ENCODE measurements at regions of chr14 and their contacts with region 1.

Region 1: GRCh38 chr14:69695322-69696203 is 71.4 kb upstream of the SRSF5 start:
- DNase-seq: no peak
- H3K4me3 Mint-ChIP-seq: peak overlapping the region; percentile 32
- H3K27ac Mint-ChIP-seq: peak overlapping the region; percentile 77
- H3K4me1 Mint-ChIP-seq: peaks cover 82% of the 10 kb centered on the region
- H3K27me3 Mint-ChIP-seq: no peaks in the 10 kb centered on the region

Region 2: GRCh38 chr14:69593018-69593677 is 102.4 kb before region 1 on chr14:
- intact Hi-C with region 1: no loop called
- DNase-seq: no peak
- H3K4me3 Mint-ChIP-seq: no peak overlapping the region
- H3K27ac Mint-ChIP-seq: no peak overlapping the region
- H3K4me1 Mint-ChIP-seq: peaks cover 7% of the 10 kb centered on the region
- H3K27me3 Mint-ChIP-seq: peaks cover 8% of the 10 kb centered on the region

Region 3: GRCh38 chr14:69715725-69716477 is 20.3 kb after region 1 on chr14:
- intact Hi-C with region 1: loop called (anchors 2 kb)
- DNase-seq: no peak
- H3K4me3 Mint-ChIP-seq: peak overlapping the region; percentile 46
- H3K27ac Mint-ChIP-seq: peak overlapping the region; percentile 92
- H3K4me1 Mint-ChIP-seq: peaks cover 94% of the 10 kb centered on the region
- H3K27me3 Mint-ChIP-seq: no peaks in the 10 kb centered on the region

Region 4: DNA sequence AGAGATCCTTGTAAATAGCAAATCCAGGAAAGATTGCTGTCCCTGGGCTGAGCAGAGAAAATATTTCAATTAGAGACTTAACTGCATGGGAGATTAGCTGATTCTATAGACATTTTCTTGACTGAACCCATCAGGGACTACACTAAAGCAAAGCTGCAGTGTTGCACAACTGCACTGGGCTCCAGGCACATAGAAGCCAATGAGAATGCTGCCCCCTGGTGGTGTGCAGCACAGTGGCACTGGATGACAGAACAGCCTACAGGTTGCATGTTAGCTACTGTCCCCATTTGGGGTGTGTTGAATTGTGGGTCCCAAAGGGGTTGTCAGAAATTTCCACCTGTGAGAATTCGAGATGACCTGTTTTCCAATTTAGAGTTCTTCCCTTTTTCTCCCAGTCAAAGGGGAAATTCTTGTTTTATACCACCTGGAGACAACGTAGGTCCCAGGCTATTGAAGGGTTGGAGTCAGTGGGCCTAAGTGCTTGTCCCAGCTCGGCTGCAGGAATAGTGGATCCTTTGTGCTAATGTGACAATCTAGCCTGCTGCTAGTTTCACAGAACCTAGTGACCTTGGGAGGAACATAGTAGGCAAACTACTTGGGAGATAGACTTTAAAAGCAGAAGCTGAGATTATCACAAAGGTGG is 378.5 kb after region 1 on chr14:
- intact Hi-C with region 1: no loop called
- DNase-seq: peak; percentile 21
- H3K4me3 Mint-ChIP-seq: no peak overlapping the region
- H3K27ac Mint-ChIP-seq: no peak overlapping the region
- H3K4me1 Mint-ChIP-seq: no peaks in the 10 kb centered on the region
- H3K27me3 Mint-ChIP-seq: peaks cover 19% of the 10 kb centered on the region